ENCODE measurements at regions of chr2 and their contacts with region 1.

Region 1: GRCh38 chr2:130355578-130356431 is at the start of gene PTPN18:
- DNase-seq: peak; percentile 91 to 97 (median 94)
- ATAC-seq: peak; percentile 95 to 98 (median 98)
- H3K4me3 ChIP-seq: peak within 1 kb of the TSS; percentile 57 to 91 (median 84)
- H3K27ac ChIP-seq: peak within 1 kb of the TSS; percentile 78 to 96 (median 86)
- H3K4me1 ChIP-seq: peaks cover 0 to 44% (median 22%) of the 10 kb centered on the region in 12 donors
- H3K27me3 ChIP-seq: no peaks in the 10 kb centered on the region
- CTCF ChIP-seq: peak; percentile 25 to 80 (median 65)
- POLR2A ChIP-seq: peak in 1 of 2 donors; percentile 93
- total RNA-seq, gene PTPN18: 9.7 to 42.5 (median 11.1) TPM

Region 2: DNA sequence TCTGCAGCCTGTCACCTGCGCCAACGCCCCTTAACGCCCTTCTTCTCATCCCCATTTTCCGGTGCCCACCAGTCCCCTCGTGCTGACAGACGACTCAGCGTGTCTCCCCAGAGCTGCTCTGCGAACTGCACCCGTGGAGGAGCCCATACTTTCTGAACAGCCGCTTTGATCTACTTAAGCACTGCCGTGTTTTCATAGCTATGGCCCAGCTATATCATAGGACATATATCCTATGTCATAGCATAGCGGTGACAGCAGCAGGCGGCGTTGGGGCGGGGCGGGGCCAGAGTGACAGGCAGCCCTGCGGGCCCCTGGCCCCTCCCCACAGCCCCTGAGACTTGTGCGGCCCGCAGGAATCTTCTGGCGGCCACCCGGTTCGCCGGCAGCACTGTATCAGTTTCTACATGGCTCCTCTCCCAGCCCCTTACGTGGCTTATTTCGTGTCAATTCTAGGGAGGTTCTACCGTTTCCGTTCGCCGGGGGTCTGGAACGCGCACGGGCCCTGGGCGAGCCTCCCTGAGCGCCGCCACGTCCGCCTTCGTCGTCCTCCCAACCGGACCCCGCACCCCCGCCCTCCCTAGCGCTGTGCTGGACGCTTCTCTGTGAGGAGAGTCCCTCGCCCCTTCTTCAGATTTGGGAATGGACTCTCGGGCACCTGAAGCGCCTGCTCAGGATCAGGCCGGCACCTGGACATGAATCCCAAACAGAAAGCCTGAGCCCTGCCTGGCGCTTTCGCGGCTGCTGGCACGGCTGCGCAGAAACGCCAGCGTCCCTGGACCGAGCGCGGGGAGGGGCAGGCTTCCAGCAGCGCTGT is 35.5 kb after region 1 on chr2:
- intact Hi-C with region 1: loop called in 1 of 10 experiments (anchors 5 kb)
- DNase-seq: peak; percentile 82 to 91 (median 82)
- ATAC-seq: peak; percentile 67 to 92 (median 88)
- H3K4me3 ChIP-seq: peak overlapping the region; percentile 36 to 84 (median 74)
- H3K27ac ChIP-seq: peak overlapping the region; percentile 79 to 94 (median 89)
- H3K4me1 ChIP-seq: peaks cover 0 to 52% (median 34%) of the 10 kb centered on the region in 12 donors
- H3K27me3 ChIP-seq: no peaks in the 10 kb centered on the region
- CTCF ChIP-seq: peak in 3 of 12 donors; percentile 3 to 18 (median 8)
- POLR2A ChIP-seq: peak in 1 of 2 donors; percentile 32